MCF 10A (cell line): ENCODE measurements at regions of chr6 and their contacts with region 1.

Region 1: GRCh38 chr6:1335367-1336037 is 23.6 kb downstream of the FOXQ1 start:
- DNase-seq: peak; percentile 95
- H3K4me3 Mint-ChIP-seq: no peak overlapping the region
- H3K27ac Mint-ChIP-seq: peak overlapping the region; percentile 39
- H3K4me1 Mint-ChIP-seq: peaks cover 25% of the 10 kb centered on the region
- H3K27me3 Mint-ChIP-seq: no peaks in the 10 kb centered on the region
- CTCF ChIP-seq: no peak

Region 2: GRCh38 chr6:593139-593906 is 742.2 kb before region 1 on chr6:
- CTCF ChIA-PET with region 1: interaction called, 9 read pairs
- POLR2A ChIA-PET with region 1: interaction called, 4 read pairs
- intact Hi-C with region 1: loop called (anchors 2 kb)
- DNase-seq: peak; percentile 69
- H3K4me3 Mint-ChIP-seq: no peak overlapping the region
- H3K27ac Mint-ChIP-seq: no peak overlapping the region
- H3K4me1 Mint-ChIP-seq: no peaks in the 10 kb centered on the region
- H3K27me3 Mint-ChIP-seq: no peaks in the 10 kb centered on the region
- CTCF ChIP-seq: peak; percentile 48

Region 3: GRCh38 chr6:766625-767024 is 568.9 kb before region 1 on chr6:
- CTCF ChIA-PET with region 1: no interaction called
- POLR2A ChIA-PET with region 1: no interaction called
- intact Hi-C with region 1: no loop called
- DNase-seq: no peak
- H3K4me3 Mint-ChIP-seq: no peak overlapping the region
- H3K27ac Mint-ChIP-seq: no peak overlapping the region
- H3K4me1 Mint-ChIP-seq: no peaks in the 10 kb centered on the region
- H3K27me3 Mint-ChIP-seq: peaks cover 45% of the 10 kb centered on the region
- CTCF ChIP-seq: no peak

Region 4: DNA sequence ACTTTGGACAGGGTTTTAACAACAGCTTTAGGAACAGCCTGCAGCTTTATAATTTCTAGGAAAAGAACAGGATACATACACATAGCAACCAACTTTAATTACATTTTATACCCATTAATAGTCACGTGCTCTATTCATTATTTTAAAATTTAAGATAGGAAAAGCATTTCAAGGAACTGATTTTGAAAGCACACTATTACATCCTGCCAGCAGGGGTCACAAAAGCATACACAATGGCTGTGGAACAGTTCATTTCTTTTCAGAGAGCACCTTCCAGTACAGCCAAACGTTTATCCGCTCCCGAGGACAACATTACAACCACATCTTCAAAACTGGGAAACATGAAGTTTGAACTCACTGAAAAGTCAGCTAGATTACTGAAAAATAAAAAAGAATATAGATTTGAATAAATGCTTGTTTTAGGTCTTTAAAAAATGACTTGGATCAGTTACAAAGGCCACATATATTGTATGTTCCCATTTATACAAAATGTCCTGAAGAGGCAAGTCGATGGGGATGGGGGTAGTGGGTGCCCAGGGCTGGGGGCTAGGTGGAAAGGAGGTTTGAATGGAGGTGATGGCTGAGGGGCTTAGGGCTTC is 537.9 kb before region 1 on chr6:
- CTCF ChIA-PET with region 1: interaction called, 29 read pairs
- POLR2A ChIA-PET with region 1: interaction called, 3 read pairs
- intact Hi-C with region 1: loop called (anchors 1 kb)
- DNase-seq: peak; percentile 68
- H3K4me3 Mint-ChIP-seq: no peak overlapping the region
- H3K27ac Mint-ChIP-seq: no peak overlapping the region
- H3K4me1 Mint-ChIP-seq: no peaks in the 10 kb centered on the region
- H3K27me3 Mint-ChIP-seq: peaks cover 40% of the 10 kb centered on the region
- CTCF ChIP-seq: peak; percentile 83

Region 5: DNA sequence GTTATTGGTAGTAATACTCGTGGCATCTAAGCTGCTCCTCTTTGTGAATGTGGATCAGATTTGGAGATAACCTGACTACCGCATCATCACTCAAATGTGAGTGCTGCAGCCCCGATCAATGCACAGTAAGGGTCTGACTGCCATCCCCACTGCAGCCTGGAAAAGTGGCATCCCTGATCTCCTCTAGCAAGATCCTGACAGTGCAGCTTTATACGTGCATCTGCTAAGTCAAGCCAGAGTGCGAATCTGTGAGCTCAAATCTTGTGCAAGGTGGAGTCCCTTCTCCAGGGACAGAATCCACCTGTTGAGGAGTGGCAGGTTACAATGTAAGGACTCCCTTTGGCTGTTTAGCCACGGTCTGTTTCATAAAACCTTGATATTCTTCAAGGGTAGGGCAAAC is 427.6 kb before region 1 on chr6:
- CTCF ChIA-PET with region 1: interaction called, 36 read pairs
- POLR2A ChIA-PET with region 1: interaction called, 30 read pairs
- intact Hi-C with region 1: loop called (anchors 1 kb)
- DNase-seq: no peak
- H3K4me3 Mint-ChIP-seq: no peak overlapping the region
- H3K27ac Mint-ChIP-seq: no peak overlapping the region
- H3K4me1 Mint-ChIP-seq: peaks cover 5% of the 10 kb centered on the region
- H3K27me3 Mint-ChIP-seq: peaks cover 23% of the 10 kb centered on the region
- CTCF ChIP-seq: no peak

Region 6: GRCh38 chr6:1110164-1110563 is 225.3 kb before region 1 on chr6:
- CTCF ChIA-PET with region 1: interaction called, 10 read pairs
- POLR2A ChIA-PET with region 1: interaction called, 3 read pairs
- intact Hi-C with region 1: no loop called
- DNase-seq: no peak
- H3K4me3 Mint-ChIP-seq: no peak overlapping the region
- H3K27ac Mint-ChIP-seq: peak overlapping the region; percentile 99
- H3K4me1 Mint-ChIP-seq: peaks cover 29% of the 10 kb centered on the region
- H3K27me3 Mint-ChIP-seq: no peaks in the 10 kb centered on the region
- CTCF ChIP-seq: no peak

Region 7: DNA sequence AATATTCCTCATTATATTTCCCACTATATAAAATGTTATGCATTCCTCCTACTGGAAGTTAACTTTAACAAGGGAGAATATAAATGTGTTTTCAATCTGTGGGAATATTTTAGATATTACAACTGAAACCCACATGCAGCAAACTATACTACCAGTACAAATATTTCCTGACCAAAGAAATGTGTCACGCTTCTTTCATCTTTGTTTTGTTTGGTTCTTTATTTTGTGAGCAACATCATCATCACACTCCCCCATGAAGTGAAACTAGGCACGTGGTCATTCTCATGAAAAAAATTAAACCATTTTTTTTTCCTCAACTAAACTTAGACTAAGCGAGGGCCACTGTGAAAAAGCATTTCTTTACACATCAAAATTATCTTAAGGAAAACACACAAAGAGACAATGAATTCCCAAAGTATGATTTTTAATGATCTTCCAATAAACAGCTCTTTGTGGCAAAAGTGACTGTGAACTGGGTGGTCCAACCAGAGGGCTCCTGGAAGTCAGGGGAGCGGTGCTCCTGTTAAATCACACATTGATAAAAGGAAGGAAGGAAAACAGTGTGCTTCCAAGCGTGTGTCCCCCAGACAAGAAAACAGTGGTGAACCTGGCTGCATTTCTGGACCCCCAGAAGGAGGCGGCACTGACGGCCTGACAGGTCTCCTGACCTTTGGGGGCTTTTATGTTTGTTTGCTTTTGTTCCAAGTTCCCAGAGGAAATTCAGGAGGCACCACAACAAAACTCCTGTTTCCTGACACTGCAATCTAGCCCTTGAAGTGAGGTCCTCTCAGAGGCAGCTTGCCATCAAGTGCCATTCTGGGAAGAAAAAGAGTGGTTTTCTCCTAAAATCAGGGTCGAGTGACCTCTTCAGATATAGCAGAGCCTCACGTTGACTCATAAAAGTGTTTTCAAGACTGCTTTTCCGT is 190.4 kb before region 1 on chr6:
- CTCF ChIA-PET with region 1: no interaction called
- POLR2A ChIA-PET with region 1: no interaction called
- intact Hi-C with region 1: no loop called
- DNase-seq: no peak
- H3K4me3 Mint-ChIP-seq: no peak overlapping the region
- H3K27ac Mint-ChIP-seq: no peak overlapping the region
- H3K4me1 Mint-ChIP-seq: no peaks in the 10 kb centered on the region
- H3K27me3 Mint-ChIP-seq: peaks cover under 1% of the 10 kb centered on the region
- CTCF ChIP-seq: no peak

Region 8: DNA sequence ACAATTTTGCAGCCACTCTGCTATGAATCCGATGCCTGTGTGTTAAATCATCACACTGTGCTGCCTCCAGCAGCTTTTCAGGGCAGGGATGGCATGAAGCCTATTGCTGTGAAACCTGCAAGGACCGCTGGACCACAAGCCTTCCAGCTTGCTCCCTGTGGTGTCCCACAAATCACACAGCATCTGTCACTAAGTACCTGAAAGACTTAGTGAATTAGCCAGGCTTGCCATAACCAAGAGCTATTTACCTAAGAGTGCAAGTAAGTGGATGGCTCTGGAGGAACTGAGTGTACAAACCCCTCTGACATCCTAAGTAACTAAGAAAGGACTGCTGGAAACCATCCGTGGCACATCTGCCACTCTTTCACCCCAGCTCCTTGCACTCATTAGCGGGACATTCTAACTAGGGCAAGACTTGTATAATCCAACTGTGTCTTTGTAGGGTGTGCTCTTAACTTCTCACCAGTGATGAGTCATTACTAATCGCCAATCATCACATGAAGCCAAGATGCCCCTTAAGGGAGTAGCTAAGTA is 11.1 kb after region 1 on chr6:
- CTCF ChIA-PET with region 1: interaction called, 22 read pairs
- POLR2A ChIA-PET with region 1: no interaction called
- intact Hi-C with region 1: no loop called
- DNase-seq: no peak
- H3K4me3 Mint-ChIP-seq: no peak overlapping the region
- H3K27ac Mint-ChIP-seq: no peak overlapping the region
- H3K4me1 Mint-ChIP-seq: peaks cover 13% of the 10 kb centered on the region
- H3K27me3 Mint-ChIP-seq: no peaks in the 10 kb centered on the region
- CTCF ChIP-seq: no peak